ENCODE measurements at regions of chr3 and their contacts with region 1.

Region 1: DNA sequence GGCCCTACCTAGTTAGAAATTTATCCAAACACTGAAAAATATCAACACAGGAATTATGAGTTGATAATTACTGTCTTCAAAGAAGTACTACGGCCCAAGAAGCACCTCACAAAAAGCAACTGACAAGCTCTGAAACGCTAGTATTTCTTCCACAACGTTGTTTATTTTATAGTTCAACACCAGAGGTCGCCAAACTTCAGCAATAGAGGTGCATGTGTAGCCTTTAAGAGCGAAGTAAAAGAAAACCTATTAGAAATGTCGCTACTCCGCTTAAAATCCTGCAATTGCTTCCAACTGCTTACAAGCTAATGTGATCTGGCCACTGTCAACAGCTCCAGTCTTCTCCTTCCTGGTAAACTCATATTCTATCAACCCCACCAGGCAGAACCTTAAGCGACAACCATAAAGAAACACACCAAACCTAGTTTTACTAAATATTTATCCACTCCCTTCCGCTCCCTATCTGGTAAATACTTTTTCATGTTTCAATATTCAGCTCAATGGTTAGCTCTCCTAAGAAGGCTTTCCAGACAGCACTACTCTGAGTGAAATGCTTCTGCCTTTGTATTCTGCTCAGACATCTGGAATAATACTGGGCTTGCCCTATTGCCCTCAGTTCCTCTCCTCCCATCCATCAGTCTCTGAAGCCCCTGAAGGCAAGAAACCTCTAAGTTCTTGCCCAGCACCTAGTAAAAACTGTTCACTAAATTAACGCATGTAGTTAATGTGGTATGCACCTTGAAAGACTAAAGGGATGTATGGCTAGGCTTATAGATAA is 110.2 kb downstream of the NR1I2 start:
- DNase-seq: peak; percentile 70
- ATAC-seq: peak; percentile 41
- H3K4me3 ChIP-seq: no peak overlapping the region
- H3K4me3 Mint-ChIP-seq: no peak overlapping the region
- H3K27ac ChIP-seq: no peak overlapping the region
- H3K27ac Mint-ChIP-seq: no peak overlapping the region
- H3K4me1 ChIP-seq: no peaks in the 10 kb centered on the region
- H3K4me1 Mint-ChIP-seq: peaks cover 4% of the 10 kb centered on the region
- H3K27me3 ChIP-seq: no peaks in the 10 kb centered on the region
- H3K27me3 Mint-ChIP-seq: no peaks in the 10 kb centered on the region
- CTCF ChIP-seq: peak; percentile 86

Region 2: GRCh38 chr3:120147072-120147871 is 255.1 kb after region 1 on chr3:
- CTCF ChIA-PET with region 1: interaction called, 151 read pairs
- POLR2A ChIA-PET with region 1: no interaction called
- intact Hi-C with region 1: loop called (anchors 1 kb)
- DNase-seq: peak; percentile 47
- ATAC-seq: peak; percentile 51
- H3K4me3 ChIP-seq: no peak overlapping the region
- H3K4me3 Mint-ChIP-seq: no peak overlapping the region
- H3K27ac ChIP-seq: no peak overlapping the region
- H3K27ac Mint-ChIP-seq: no peak overlapping the region
- H3K4me1 ChIP-seq: no peaks in the 10 kb centered on the region
- H3K4me1 Mint-ChIP-seq: no peaks in the 10 kb centered on the region
- H3K27me3 ChIP-seq: no peaks in the 10 kb centered on the region
- H3K27me3 Mint-ChIP-seq: peaks cover 4% of the 10 kb centered on the region
- CTCF ChIP-seq: peak; percentile 58

Region 3: DNA sequence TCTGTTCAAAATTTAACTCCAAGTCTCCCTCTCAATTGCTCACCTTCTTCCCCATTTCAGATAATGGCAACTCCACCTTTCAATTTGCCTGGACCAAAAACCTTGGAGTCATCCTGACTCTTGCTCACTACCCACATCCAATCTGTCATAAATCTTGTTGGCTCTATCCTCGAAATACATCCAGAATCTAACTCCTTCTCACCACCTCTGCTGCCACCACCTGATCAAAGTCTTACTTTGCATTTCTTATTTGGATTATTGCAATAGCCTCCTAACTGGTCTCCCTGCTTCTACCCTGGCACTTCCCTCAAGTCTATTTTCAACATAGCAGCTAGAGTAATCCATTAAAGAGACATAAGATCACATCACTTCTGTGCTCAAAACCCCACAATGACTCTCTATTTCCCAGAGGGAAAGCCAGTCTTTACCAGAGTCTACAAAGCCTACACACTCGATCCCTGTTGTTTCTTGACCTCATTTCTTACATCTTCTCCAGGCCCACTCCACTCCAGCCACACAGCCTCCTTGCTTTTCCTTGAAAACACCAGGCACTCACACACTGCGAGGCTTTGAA is 306.3 kb after region 1 on chr3:
- CTCF ChIA-PET with region 1: interaction called, 12 read pairs
- POLR2A ChIA-PET with region 1: no interaction called
- intact Hi-C with region 1: loop called (anchors 5 kb)
- DNase-seq: peak; percentile 16
- ATAC-seq: no peak
- H3K4me3 ChIP-seq: no peak overlapping the region
- H3K4me3 Mint-ChIP-seq: no peak overlapping the region
- H3K27ac ChIP-seq: no peak overlapping the region
- H3K27ac Mint-ChIP-seq: no peak overlapping the region
- H3K4me1 ChIP-seq: no peaks in the 10 kb centered on the region
- H3K4me1 Mint-ChIP-seq: no peaks in the 10 kb centered on the region
- H3K27me3 ChIP-seq: no peaks in the 10 kb centered on the region
- H3K27me3 Mint-ChIP-seq: no peaks in the 10 kb centered on the region
- CTCF ChIP-seq: no peak

Region 4: GRCh38 chr3:120245386-120245785 is 353.3 kb after region 1 on chr3:
- CTCF ChIA-PET with region 1: interaction called, 10 read pairs
- POLR2A ChIA-PET with region 1: no interaction called
- intact Hi-C with region 1: loop called (anchors 5 kb)
- DNase-seq: no peak
- ATAC-seq: no peak
- H3K4me3 ChIP-seq: no peak overlapping the region
- H3K4me3 Mint-ChIP-seq: no peak overlapping the region
- H3K27ac ChIP-seq: no peak overlapping the region
- H3K27ac Mint-ChIP-seq: no peak overlapping the region
- H3K4me1 ChIP-seq: no peaks in the 10 kb centered on the region
- H3K4me1 Mint-ChIP-seq: no peaks in the 10 kb centered on the region
- H3K27me3 ChIP-seq: peaks cover 0 to 8% (median 5%) of the 10 kb centered on the region in 4 experiments
- H3K27me3 Mint-ChIP-seq: peaks cover 41% of the 10 kb centered on the region
- CTCF ChIP-seq: no peak

Region 5: GRCh38 chr3:120506828-120507774 is 615.0 kb after region 1 on chr3:
- CTCF ChIA-PET with region 1: no interaction called
- POLR2A ChIA-PET with region 1: no interaction called
- intact Hi-C with region 1: loop called (anchors 5 kb)
- DNase-seq: peak; percentile 36
- ATAC-seq: no peak
- H3K4me3 ChIP-seq: no peak overlapping the region
- H3K4me3 Mint-ChIP-seq: no peak overlapping the region
- H3K27ac ChIP-seq: no peak overlapping the region
- H3K27ac Mint-ChIP-seq: no peak overlapping the region
- H3K4me1 ChIP-seq: no peaks in the 10 kb centered on the region
- H3K4me1 Mint-ChIP-seq: no peaks in the 10 kb centered on the region
- H3K27me3 ChIP-seq: peaks cover 0 to 12% (median 2%) of the 10 kb centered on the region in 4 experiments
- H3K27me3 Mint-ChIP-seq: peaks cover 31% of the 10 kb centered on the region
- CTCF ChIP-seq: peak; percentile 65